ENCODE measurements at regions of chr11 and their contacts with region 1.

Region 1: DNA sequence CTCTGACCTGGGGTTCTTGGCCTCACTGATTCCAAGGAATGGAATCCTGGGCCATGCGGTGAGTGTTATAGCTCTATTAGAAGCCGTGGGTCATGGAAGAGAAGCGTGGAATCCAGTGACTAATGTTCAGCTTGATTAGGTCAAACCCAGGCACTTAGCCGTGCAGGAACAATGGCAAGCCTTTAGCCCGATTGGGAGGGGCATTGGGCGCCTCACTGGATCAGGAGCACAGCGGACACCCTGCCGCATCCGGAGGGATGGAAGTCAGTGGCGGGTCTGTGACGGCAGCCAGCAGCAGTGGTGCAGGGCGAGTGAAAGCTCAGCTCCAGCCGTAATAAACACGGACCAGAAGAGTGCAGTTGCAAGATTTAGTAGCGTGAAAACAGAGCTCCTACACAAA is 20.5 kb upstream of the SLC17A6 start:
- DNase-seq: no peak
- H3K4me3 ChIP-seq: no peak overlapping the region
- H3K27me3 ChIP-seq: no peaks in the 10 kb centered on the region
- CTCF ChIP-seq: no peak

Region 2: DNA sequence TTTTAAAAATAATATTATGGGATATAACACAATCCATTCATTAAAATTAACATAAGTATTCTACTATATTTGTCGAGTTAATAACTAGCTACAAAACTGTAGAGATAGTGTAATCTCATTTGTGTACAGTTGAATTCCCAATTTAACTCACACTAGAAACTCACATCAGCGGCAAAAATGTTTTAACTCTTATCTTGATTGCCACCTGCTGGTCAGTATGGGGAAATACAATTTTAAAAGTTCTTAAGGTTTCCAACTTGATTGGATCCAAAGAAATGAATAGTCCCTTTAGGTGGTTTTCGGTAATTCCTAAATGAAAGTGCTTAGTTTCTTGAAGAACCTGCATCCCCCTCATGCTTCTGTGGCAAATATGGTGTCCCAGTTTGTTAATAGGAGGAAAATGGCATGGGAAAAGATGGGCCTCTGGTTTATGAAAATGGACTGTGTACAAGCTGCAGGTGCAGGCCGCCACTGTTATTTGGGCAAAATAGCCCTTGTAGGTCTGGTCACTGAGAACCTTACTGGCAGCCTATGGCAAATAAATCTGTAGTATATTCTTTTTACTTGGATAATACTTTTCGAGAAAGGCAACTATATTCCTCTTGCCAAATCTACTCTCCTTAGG is 13.2 kb before region 1 on chr11:
- CTCF ChIA-PET with region 1: interaction called, 12 read pairs
- POLR2A ChIA-PET with region 1: no interaction called
- DNase-seq: peak; percentile 4
- H3K4me3 ChIP-seq: no peak overlapping the region
- H3K27me3 ChIP-seq: no peaks in the 10 kb centered on the region
- CTCF ChIP-seq: peak; percentile 56

Measured in BJ (cell line).